MCF 10A (cell line): ENCODE measurements at regions of chr14 and their contacts with region 1.

Region 1: DNA sequence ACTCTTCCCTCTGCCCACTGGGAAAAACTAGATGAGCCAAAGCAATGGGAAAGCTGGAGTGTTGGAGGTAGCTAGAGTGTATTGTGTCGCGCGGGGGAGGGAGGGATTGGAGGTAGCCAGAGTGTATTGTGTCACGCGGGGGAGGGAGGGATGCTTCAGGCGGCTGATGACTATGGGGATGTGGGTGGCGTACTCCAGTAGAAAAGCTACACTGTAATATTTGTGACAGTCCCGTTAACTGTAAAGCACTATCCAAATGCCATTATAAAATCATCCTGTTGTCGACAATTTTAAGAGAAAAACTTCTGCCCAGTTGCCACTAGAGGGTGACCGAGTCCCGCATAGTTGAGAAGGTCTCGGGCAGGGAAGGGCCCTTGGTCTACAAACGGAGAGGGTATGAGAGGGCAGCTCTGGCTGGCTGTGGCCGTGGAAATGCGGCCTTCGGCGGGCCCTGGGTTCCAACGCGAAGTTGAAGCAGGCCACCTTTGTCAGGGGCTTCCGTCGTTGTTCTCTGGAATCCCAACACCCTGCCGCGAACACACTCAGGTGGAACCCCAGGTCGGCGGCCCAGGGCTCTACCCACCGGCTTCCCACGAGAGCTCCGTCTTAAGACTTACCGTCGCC is 15.1 kb upstream of the PLEK2 start:
- DNase-seq: peak; percentile 80
- H3K4me3 Mint-ChIP-seq: no peak overlapping the region
- H3K27ac Mint-ChIP-seq: no peak overlapping the region
- H3K4me1 Mint-ChIP-seq: peaks cover 17% of the 10 kb centered on the region
- H3K27me3 Mint-ChIP-seq: no peaks in the 10 kb centered on the region
- CTCF ChIP-seq: peak; percentile 64

Region 2: GRCh38 chr14:67446120-67447032 is 19.3 kb after region 1 on chr14:
- CTCF ChIA-PET with region 1: interaction called, 13 read pairs
- POLR2A ChIA-PET with region 1: interaction called, 4 read pairs
- intact Hi-C with region 1: no loop called
- DNase-seq: no peak
- H3K4me3 Mint-ChIP-seq: no peak overlapping the region
- H3K27ac Mint-ChIP-seq: no peak overlapping the region
- H3K4me1 Mint-ChIP-seq: peaks cover 7% of the 10 kb centered on the region
- H3K27me3 Mint-ChIP-seq: no peaks in the 10 kb centered on the region
- CTCF ChIP-seq: no peak

Region 3: DNA sequence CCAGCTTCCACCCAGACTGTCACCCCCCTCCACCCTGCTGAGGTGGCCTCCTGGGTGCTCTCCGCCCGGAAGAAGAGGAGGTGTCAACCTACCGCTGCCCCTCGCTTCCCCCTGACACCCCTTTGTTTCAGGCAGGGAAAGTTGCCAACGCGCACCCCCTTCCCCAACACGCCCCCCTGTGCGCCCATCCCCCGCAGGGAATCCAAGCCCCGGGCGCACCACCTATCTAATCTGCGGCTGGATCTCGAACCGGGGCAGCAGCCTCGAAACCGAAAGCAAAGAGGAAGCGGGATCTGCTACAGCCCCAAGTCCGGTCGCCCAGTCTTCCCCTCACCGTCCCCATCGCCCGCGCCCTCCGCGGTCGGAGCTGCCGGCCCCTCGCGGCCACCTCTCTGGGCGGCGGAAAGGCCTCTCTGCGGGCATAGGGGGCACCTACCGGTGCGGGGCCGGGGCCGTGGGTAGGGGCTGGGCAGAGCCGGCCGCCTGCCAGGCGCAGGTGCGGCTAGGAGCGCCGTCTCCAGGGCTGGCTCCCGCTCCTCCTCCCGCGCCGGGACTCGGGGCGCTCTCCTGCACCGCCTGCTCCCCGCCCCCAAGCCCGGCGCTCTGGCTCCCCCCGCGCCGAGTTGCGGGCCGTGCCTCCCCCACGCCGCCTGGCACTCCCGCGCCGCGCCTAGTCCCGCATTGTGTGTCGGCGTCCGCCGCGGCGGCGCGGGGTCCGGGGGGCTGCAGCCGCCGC is 87.7 kb after region 1 on chr14:
- CTCF ChIA-PET with region 1: interaction called, 14 read pairs
- POLR2A ChIA-PET with region 1: interaction called, 4 read pairs
- intact Hi-C with region 1: no loop called
- DNase-seq: peak; percentile 38
- H3K4me3 Mint-ChIP-seq: peak overlapping the region; percentile 76
- H3K27ac Mint-ChIP-seq: no peak overlapping the region
- H3K4me1 Mint-ChIP-seq: no peaks in the 10 kb centered on the region
- H3K27me3 Mint-ChIP-seq: peaks cover 29% of the 10 kb centered on the region
- CTCF ChIP-seq: no peak

Region 4: GRCh38 chr14:67564236-67564635 is 137.1 kb after region 1 on chr14:
- CTCF ChIA-PET with region 1: interaction called, 221 read pairs
- POLR2A ChIA-PET with region 1: interaction called, 3 read pairs
- intact Hi-C with region 1: no loop called
- DNase-seq: peak; percentile 40
- H3K4me3 Mint-ChIP-seq: no peak overlapping the region
- H3K27ac Mint-ChIP-seq: no peak overlapping the region
- H3K4me1 Mint-ChIP-seq: peaks cover 12% of the 10 kb centered on the region
- H3K27me3 Mint-ChIP-seq: no peaks in the 10 kb centered on the region
- CTCF ChIP-seq: no peak

Region 5: DNA sequence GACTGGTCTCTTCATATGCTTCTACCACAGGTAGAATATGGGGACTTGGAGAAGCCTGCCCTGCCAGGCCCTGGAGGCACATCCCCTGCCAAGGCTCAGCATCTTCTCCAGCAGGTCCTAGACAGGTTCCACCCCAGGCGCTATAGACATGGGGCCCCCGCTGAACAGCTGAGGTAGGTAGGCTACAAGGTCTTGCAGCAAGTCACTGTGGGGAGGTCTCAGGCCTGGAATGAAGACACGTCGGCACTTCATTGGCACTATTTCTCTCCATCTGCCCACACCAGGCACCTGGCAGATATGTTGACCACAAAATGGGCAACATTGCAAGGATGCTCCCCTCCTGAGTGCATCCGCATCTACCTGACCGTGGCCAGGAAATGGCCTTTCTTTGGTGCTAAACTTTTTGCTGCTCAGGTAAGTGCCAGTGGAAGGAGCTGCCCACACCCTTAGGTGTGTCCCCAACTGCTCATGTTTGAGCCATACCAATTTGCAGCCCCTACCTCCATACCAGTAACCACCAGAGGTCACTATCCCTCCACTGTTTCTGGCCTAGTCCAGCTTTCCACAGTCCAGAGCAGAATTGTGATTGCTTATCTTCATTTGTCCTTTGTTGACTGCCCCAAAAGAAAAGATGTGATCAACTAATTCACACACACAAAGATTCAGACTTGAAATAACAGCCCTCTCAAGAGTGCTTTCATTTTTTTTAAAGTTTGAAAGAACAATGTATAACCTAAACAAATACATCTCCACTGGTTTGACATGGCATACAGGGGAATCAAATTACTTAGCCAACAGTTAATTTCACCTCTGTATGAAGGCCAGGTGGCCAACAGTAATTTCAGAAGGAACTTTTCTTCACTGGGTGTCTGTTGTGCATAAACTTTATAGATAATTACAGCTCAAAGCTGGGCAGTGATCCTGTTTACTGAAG is 156.9 kb after region 1 on chr14:
- CTCF ChIA-PET with region 1: interaction called, 56 read pairs
- POLR2A ChIA-PET with region 1: no interaction called
- intact Hi-C with region 1: no loop called
- DNase-seq: peak; percentile 66
- H3K4me3 Mint-ChIP-seq: no peak overlapping the region
- H3K27ac Mint-ChIP-seq: no peak overlapping the region
- H3K4me1 Mint-ChIP-seq: no peaks in the 10 kb centered on the region
- H3K27me3 Mint-ChIP-seq: no peaks in the 10 kb centered on the region
- CTCF ChIP-seq: peak; percentile 65

Region 6: GRCh38 chr14:67666750-67667449 is 239.8 kb after region 1 on chr14:
- CTCF ChIA-PET with region 1: interaction called, 36 read pairs
- POLR2A ChIA-PET with region 1: no interaction called
- intact Hi-C with region 1: loop called (anchors 1 kb)
- DNase-seq: peak; percentile 72
- H3K4me3 Mint-ChIP-seq: no peak overlapping the region
- H3K27ac Mint-ChIP-seq: peak overlapping the region; percentile 27
- H3K4me1 Mint-ChIP-seq: peaks cover 17% of the 10 kb centered on the region
- H3K27me3 Mint-ChIP-seq: no peaks in the 10 kb centered on the region
- CTCF ChIP-seq: peak; percentile 73